SK-N-SH (cell line): ENCODE measurements at regions of chr7 and their contacts with region 1.

Region 1: GRCh38 chr7:15720849-15721471 is 34.5 kb upstream of the MEOX2 start:
- DNase-seq: peak; percentile 5
- H3K4me3 ChIP-seq: no peak overlapping the region
- H3K27ac ChIP-seq: no peak overlapping the region
- H3K4me1 ChIP-seq: no peaks in the 10 kb centered on the region
- H3K27me3 ChIP-seq: 0 out of 2 replicates have a peak, but pooled peaks cover 5% of the 10 kb centered on the region
- CTCF ChIP-seq: peak; percentile 99
- EP300 ChIP-seq: no peak
- RAD21 ChIP-seq: peak; percentile 83

Region 2: DNA sequence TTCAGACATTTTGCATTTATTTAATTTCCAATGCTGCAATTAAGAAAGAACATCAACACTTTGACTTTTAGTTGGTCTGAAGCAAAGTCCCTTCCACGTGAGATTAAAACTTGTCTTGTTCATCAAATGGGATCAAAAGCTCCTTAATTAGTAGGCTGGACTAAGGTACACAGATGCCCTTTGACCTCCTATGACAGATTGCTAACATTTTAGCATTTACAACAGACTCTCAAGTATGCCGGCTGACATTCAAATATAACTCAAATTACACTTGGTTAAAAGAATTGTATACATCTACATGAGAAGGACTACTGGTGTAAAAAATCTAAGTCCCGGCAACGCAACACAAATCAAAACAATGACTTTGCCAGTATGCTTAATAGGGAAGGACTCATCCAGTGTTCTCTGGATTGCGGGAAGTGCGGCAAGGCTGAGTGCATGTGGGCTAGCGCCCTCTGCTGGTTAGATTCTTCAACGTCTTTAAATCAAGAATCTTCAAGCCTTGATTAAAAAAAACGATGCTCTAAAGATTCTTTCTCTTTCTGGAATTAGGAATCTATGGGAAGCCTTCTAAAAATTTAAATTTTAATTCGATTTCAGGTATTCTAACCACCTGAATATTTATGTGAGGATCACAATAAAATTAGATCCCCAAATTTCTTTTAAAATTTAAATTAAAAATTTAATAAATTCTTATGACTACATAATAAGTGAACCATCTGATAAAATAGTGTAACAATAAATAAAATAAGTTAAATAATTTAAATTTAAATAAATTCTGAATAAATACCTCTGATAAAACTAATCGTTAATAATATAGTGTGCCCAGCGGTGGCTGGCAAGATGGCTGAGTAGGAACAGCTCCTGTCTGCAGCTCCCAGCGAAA is 1263.1 kb before region 1 on chr7:
- CTCF ChIA-PET with region 1: no interaction called
- POLR2A ChIA-PET with region 1: no interaction called
- DNase-seq: peak; percentile 53
- H3K4me3 ChIP-seq: peak overlapping the region; percentile 6 to 9; a peak in 1 of 4 replicates
- H3K27ac ChIP-seq: no peak overlapping the region; a peak in 1 of 4 replicates
- H3K4me1 ChIP-seq: no peaks in the 10 kb centered on the region; a peak in 1 of 4 replicates
- H3K27me3 ChIP-seq: no peaks in the 10 kb centered on the region
- CTCF ChIP-seq: peak; percentile 98
- EP300 ChIP-seq: no peak
- RAD21 ChIP-seq: peak; percentile 98

Region 3: GRCh38 chr7:14717816-14718215 is 1003.1 kb before region 1 on chr7:
- CTCF ChIA-PET with region 1: interaction called, 59 read pairs
- POLR2A ChIA-PET with region 1: no interaction called
- DNase-seq: peak; percentile 40
- H3K4me3 ChIP-seq: no peak overlapping the region
- H3K27ac ChIP-seq: no peak overlapping the region
- H3K4me1 ChIP-seq: no peaks in the 10 kb centered on the region
- H3K27me3 ChIP-seq: no peaks in the 10 kb centered on the region
- CTCF ChIP-seq: peak; percentile 97
- EP300 ChIP-seq: no peak
- RAD21 ChIP-seq: peak; percentile 91

Region 4: GRCh38 chr7:15199482-15199881 is 521.5 kb before region 1 on chr7:
- CTCF ChIA-PET with region 1: interaction called, 12 read pairs
- POLR2A ChIA-PET with region 1: no interaction called
- DNase-seq: peak; percentile 11
- H3K4me3 ChIP-seq: no peak overlapping the region
- H3K27ac ChIP-seq: peak overlapping the region in 1 of 2 experiments; percentile 96; a peak in 1 of 4 replicates
- H3K4me1 ChIP-seq: peaks cover 11 to 17% of the 10 kb centered on the region in 2 experiments; a peak in 3 of 4 replicates
- H3K27me3 ChIP-seq: no peaks in the 10 kb centered on the region
- CTCF ChIP-seq: peak; percentile 79
- EP300 ChIP-seq: no peak
- RAD21 ChIP-seq: peak; percentile 57

Region 5: DNA sequence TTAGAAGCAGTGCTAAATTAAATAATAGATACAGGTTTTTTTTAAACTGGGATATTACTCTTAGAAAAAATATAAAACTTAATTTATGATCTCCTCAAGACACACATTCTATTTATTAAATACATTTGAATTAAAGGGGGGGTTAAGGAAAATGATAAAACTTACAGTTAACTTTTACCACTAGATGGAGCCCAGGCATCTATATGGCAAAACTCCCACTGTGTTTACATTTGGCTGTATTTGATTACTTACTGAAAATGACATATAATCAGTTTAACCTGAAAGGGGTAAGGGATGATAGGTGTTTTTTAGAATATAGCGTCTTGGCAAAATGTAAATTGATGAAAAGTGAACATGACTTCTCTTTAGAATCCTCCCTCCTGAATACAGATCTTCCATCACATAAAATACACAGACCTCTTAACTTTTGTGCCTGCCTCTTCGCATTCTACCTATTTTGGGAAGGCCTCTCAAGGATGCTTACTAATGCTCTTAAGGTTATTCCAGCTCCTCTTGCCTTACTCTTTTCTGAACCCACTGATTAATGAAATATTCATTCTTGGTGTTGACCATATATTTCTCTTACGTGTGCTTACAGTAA is 394.8 kb before region 1 on chr7:
- CTCF ChIA-PET with region 1: interaction called, 59 read pairs
- POLR2A ChIA-PET with region 1: no interaction called
- DNase-seq: peak; percentile 32
- H3K4me3 ChIP-seq: no peak overlapping the region
- H3K27ac ChIP-seq: no peak overlapping the region
- H3K4me1 ChIP-seq: no peaks in the 10 kb centered on the region; a peak in 1 of 4 replicates
- H3K27me3 ChIP-seq: no peaks in the 10 kb centered on the region
- CTCF ChIP-seq: peak; percentile 96
- EP300 ChIP-seq: no peak
- RAD21 ChIP-seq: peak; percentile 88

Region 6: GRCh38 chr7:15612205-15612604 is 108.8 kb before region 1 on chr7:
- CTCF ChIA-PET with region 1: interaction called, 10 read pairs
- POLR2A ChIA-PET with region 1: no interaction called
- DNase-seq: no peak
- H3K4me3 ChIP-seq: no peak overlapping the region; a peak in 1 of 4 replicates
- H3K27ac ChIP-seq: no peak overlapping the region
- H3K4me1 ChIP-seq: no peaks in the 10 kb centered on the region; a peak in 1 of 4 replicates
- H3K27me3 ChIP-seq: peaks cover 11% of the 10 kb centered on the region; the same call in 1 of the 2 replicates
- CTCF ChIP-seq: no peak
- EP300 ChIP-seq: no peak
- RAD21 ChIP-seq: no peak

Region 7: DNA sequence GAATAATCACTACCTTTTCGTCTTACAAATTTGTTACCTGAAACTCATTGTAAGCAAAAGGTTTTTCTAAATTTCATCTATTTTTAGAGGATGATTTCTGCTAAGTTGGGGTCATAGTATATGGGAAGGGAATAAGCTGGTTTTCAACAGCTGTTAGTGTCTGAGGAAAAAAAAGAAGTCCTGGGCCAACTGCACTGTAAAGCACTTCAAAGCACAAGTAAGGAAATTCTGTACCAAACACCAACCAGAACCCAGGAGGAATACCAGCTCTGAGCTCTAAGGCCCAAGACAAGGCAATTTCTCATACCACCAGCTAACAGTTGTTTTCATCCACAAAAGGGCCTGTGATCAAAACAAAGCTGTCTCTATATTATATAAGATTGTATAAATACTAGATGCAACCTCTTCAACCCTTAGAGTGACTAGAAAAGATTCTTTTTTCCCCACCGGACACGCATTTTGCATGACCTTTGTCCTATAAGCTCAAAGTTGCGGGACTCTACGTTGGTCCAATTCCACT is 28.4 kb before region 1 on chr7:
- CTCF ChIA-PET with region 1: interaction called, 32 read pairs
- POLR2A ChIA-PET with region 1: no interaction called
- DNase-seq: no peak
- H3K4me3 ChIP-seq: no peak overlapping the region
- H3K27ac ChIP-seq: no peak overlapping the region
- H3K4me1 ChIP-seq: no peaks in the 10 kb centered on the region
- H3K27me3 ChIP-seq: peaks cover 18% of the 10 kb centered on the region
- CTCF ChIP-seq: no peak
- EP300 ChIP-seq: no peak
- RAD21 ChIP-seq: no peak

Region 8: DNA sequence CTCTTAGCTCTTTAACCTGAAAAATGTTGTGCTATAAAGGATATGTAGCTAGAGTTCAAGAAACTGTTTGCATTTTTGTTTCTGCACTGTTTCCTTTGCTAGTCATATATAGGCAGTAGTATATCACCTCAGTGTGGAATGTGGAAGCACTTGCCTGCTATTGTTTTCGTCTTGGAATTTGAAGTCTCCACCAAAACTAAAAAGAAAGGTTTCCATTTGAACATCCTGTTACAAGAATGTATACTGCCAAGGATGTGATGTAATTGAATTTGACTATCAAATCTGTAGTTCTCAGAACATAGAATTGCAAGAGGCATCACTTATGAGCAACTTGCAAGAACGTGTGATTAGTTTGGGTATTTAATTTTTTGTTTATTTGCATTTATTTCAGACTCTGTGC is 16.6 kb after region 1 on chr7:
- CTCF ChIA-PET with region 1: interaction called, 23 read pairs
- POLR2A ChIA-PET with region 1: no interaction called
- DNase-seq: no peak
- H3K4me3 ChIP-seq: no peak overlapping the region
- H3K27ac ChIP-seq: no peak overlapping the region
- H3K4me1 ChIP-seq: no peaks in the 10 kb centered on the region
- H3K27me3 ChIP-seq: peaks cover 4% of the 10 kb centered on the region; the same call in 1 of the 2 replicates
- CTCF ChIP-seq: no peak
- EP300 ChIP-seq: no peak
- RAD21 ChIP-seq: no peak

Region 9: GRCh38 chr7:15863951-15864625 is 143.1 kb after region 1 on chr7:
- CTCF ChIA-PET with region 1: no interaction called
- POLR2A ChIA-PET with region 1: no interaction called
- DNase-seq: no peak
- H3K4me3 ChIP-seq: no peak overlapping the region
- H3K27ac ChIP-seq: no peak overlapping the region
- H3K4me1 ChIP-seq: no peaks in the 10 kb centered on the region
- H3K27me3 ChIP-seq: no peaks in the 10 kb centered on the region
- CTCF ChIP-seq: no peak
- EP300 ChIP-seq: no peak
- RAD21 ChIP-seq: no peak